Activated naive CD4-positive, alpha-beta T cell treated with anti-CD3 and anti-CD28 coated beads for 36 hours (primary cell): ENCODE measurements at regions of chrX and their contacts with region 1.

Region 1: GRCh38 chrX:19772826-19773628 is 114.4 kb downstream of the SH3KBP1 start:
- DNase-seq: no peak
- H3K4me3 Mint-ChIP-seq: peak overlapping the region; percentile 56
- H3K27ac Mint-ChIP-seq: peak overlapping the region; percentile 92
- H3K4me1 Mint-ChIP-seq: peaks cover 77% of the 10 kb centered on the region
- H3K27me3 Mint-ChIP-seq: no peaks in the 10 kb centered on the region

Region 2: GRCh38 chrX:19721726-19722370 is 51.2 kb before region 1 on chrX:
- CTCF ChIA-PET with region 1: no interaction called
- intact Hi-C with region 1: no loop called
- DNase-seq: no peak
- H3K4me3 Mint-ChIP-seq: no peak overlapping the region
- H3K27ac Mint-ChIP-seq: no peak overlapping the region
- H3K4me1 Mint-ChIP-seq: peaks cover 60% of the 10 kb centered on the region
- H3K27me3 Mint-ChIP-seq: no peaks in the 10 kb centered on the region

Region 3: DNA sequence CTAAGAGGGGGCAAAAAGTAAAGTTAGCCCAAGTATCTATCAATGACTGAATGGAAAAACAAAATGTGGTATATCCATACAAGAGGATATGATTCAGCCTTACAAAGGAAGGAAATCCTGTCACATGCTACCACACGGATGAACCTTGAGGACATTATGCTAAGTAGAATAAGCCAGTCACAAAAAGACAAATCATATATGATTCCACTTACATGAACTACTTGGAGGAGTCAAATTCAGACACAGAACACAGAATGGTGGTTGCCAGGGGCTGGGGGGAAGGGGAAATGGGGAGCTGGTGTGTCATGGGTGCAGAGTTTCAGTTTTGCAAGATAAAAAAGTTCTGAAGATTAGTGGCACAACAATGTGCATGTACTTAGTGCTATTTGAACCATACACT is 12.6 kb after region 1 on chrX:
- CTCF ChIA-PET with region 1: no interaction called
- intact Hi-C with region 1: loop called (anchors 1 kb)
- DNase-seq: peak; percentile 81
- H3K4me3 Mint-ChIP-seq: no peak overlapping the region
- H3K27ac Mint-ChIP-seq: peak overlapping the region; percentile 91
- H3K4me1 Mint-ChIP-seq: peaks cover 74% of the 10 kb centered on the region
- H3K27me3 Mint-ChIP-seq: no peaks in the 10 kb centered on the region

Region 4: DNA sequence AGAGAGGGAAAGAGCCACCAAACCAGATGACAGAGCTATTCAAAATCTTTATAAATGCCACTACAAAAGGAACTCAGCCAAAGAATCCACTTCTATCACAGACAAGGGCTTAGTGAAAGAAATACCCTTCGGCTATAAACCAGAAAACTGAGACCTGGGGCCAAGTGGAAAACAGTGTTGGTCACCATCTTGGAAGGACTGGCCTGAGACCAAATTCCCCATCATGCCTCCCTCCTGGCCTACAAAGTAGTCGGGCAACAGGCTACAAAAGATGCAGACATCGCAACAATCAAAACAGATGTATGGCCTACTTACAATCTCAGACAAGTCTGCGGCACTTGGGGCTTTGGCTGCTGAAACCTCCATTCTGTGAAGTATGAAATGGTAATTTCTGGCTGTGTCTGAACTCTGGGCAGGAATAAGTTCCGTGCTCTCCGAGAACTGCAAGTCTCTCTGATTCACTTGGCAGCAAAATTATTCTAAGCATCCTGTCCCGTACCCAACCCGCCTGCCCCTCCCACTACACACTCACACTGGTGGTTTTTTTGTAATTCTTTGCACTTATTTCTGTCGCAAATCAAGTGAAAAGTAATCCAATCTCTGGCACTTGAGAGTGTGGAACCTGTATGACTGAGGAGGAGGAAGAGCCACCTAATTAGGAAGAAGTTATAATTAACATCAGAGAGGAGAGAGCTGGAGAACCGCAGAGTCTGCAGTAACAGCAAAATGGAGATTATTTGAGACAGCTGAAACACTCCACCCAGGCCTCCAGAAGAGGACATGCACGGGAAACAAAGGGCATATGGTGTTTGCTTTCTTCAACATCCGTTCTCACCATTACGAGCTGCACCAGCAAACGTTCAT is 26.5 kb after region 1 on chrX:
- CTCF ChIA-PET with region 1: interaction called, 3 read pairs
- intact Hi-C with region 1: loop called (anchors 1 kb)
- DNase-seq: peak; percentile 68
- H3K4me3 Mint-ChIP-seq: peak overlapping the region; percentile 88
- H3K27ac Mint-ChIP-seq: peak overlapping the region; percentile 99
- H3K4me1 Mint-ChIP-seq: peaks cover 65% of the 10 kb centered on the region
- H3K27me3 Mint-ChIP-seq: no peaks in the 10 kb centered on the region